Thyroid gland (tissue), 4 donors: ENCODE measurements at regions of chr20 and their contacts with region 1.

Region 1: DNA sequence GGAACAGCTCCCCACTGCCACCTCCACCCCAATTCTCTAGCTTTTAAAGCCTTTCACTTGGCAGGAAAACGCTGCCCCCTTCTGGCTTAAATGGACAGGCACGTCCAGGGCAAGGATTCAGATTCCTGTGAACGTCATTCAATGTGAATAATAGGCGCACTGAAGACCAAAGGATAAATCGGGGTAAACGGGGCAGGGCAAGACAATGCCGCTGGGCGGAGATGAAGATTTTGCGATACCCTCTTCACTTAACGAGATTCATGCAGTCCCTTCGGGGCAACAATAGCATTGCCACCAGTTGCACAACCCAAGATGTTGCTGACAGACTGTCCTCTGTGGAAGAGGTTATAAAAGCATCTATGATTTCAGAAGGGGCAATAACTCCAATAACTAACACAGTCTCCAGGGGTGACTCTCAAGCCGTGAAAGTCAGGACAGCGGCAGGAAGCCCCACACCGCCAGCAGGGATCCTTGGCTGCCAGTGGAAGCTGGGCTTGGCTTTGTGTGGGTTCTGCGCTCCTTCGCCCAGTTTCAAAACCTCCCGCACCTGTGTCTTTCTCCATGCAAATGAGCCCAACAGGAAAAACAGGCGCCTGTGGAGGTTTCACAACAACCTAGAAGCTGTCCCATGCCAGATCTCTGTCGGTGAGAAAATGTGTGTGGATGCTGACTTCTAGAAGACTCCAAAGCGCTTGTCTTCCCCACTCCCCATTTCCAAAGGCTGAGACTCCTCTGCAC is 291.8 kb downstream of the BMP7 start:
- DNase-seq: peak; percentile 47 to 66
- H3K4me3 ChIP-seq: no peak overlapping the region
- H3K27ac ChIP-seq: no peak overlapping the region
- H3K4me1 ChIP-seq: no peaks in the 10 kb centered on the region
- H3K27me3 ChIP-seq: no peaks in the 10 kb centered on the region
- CTCF ChIP-seq: peak; percentile 15 to 65 (median 52)
- POLR2A ChIP-seq: no peak

Region 2: GRCh38 chr20:56540420-56540819 is 434.2 kb before region 1 on chr20:
- intact Hi-C with region 1: loop called (anchors 10 kb)
- DNase-seq: no peak
- H3K4me3 ChIP-seq: no peak overlapping the region
- H3K27ac ChIP-seq: no peak overlapping the region
- H3K4me1 ChIP-seq: no peaks in the 10 kb centered on the region
- H3K27me3 ChIP-seq: no peaks in the 10 kb centered on the region
- CTCF ChIP-seq: no peak
- POLR2A ChIP-seq: no peak

Region 3: DNA sequence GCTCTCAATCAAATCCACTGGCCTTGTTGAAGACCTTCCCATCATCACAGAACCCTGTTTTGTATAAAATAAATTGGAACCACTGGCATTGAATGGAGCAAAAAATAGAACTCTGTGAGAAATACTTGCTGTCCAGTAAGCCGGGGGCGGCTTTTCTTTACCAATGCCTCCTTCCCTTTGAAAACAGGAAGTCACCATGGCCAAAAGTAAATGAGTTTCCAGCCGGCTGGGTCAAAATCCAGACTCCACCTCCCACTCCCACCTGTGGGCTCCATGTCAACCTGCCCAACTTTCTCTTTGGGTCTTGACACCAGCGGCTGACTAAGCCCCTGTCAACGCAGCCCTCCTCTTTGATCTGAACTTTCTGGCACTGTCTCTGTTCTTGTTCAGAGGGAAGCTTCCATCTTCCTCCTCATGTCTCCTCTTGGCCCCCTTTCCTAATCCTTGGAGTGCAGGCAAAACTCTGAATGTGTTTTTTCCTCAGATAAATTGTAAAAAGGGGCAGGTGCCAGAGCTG is 250.4 kb before region 1 on chr20:
- intact Hi-C with region 1: no loop called
- DNase-seq: no peak
- H3K4me3 ChIP-seq: no peak overlapping the region
- H3K27ac ChIP-seq: no peak overlapping the region
- H3K4me1 ChIP-seq: no peaks in the 10 kb centered on the region
- H3K27me3 ChIP-seq: no peaks in the 10 kb centered on the region
- CTCF ChIP-seq: no peak
- POLR2A ChIP-seq: no peak

Region 4: DNA sequence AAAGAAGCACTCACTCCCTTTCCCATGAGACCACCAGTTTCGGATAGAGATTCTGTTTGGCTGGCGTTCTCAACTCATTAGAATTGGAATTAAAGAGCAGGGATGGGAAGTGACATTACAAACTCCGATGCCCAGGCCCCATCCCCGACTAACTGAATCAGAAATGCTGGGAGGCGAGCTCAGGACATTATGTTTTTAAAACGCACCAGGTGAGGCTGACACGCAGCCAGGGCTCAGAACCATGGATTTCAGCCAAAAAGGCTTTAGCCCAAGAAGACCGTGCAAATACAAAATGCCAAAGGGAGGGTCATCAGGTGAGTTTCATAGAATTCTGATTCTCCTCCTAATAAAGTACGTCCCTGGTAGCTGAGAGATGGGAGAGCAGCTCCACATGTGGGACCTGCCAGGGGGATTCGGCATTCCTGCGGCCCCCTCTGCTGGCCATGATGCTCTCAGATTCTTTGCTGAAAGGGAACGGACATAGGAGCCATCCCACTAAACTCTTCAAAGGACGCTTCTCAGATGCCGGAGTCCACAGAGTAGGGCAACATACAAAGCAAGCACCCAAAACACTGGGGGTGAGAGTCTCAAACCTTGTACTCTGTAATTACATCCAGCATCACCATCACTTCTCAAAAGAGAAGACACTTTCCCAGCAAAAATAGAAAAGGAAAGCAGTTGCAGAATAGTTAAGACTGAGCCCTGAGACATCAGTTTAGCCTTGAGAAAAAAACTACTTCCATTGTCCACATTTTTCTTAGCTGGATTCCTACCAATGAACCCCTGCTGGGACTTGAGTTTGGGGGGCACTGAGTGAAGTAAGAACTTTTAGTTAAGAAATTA is 86.6 kb after region 1 on chr20:
- intact Hi-C with region 1: no loop called
- DNase-seq: peak; percentile 59 to 65
- H3K4me3 ChIP-seq: no peak overlapping the region
- H3K27ac ChIP-seq: no peak overlapping the region
- H3K4me1 ChIP-seq: peaks cover 0 to 11% of the 10 kb centered on the region in 2 donors
- H3K27me3 ChIP-seq: no peaks in the 10 kb centered on the region
- CTCF ChIP-seq: peak in 3 of 6 experiments; percentile 42 to 43 (median 43)
- POLR2A ChIP-seq: no peak

Region 5: GRCh38 chr20:57231951-57232428 is 257.3 kb after region 1 on chr20:
- intact Hi-C with region 1: no loop called
- DNase-seq: no peak
- H3K4me3 ChIP-seq: no peak overlapping the region
- H3K27ac ChIP-seq: no peak overlapping the region
- H3K4me1 ChIP-seq: peaks cover 45 to 50% of the 10 kb centered on the region in 2 donors
- H3K27me3 ChIP-seq: no peaks in the 10 kb centered on the region
- CTCF ChIP-seq: no peak
- POLR2A ChIP-seq: no peak